Ascending aorta (tissue), 2 donors: ENCODE measurements at regions of chr13 and their contacts with region 1.

Region 1: GRCh38 chr13:77779552-77780272 is 82.2 kb downstream of the SLAIN1 start:
- DNase-seq: no peak
- H3K4me3 ChIP-seq: peak overlapping the region in 1 of 2 donors; percentile 6
- H3K27ac ChIP-seq: no peak overlapping the region
- H3K4me1 ChIP-seq: no peaks in the 10 kb centered on the region
- H3K27me3 ChIP-seq: no peaks in the 10 kb centered on the region
- CTCF ChIP-seq: peak; percentile 8 to 55 (median 39)

Region 2: GRCh38 chr13:77898097-77898496 is 118.4 kb after region 1 on chr13:
- intact Hi-C with region 1: no loop called
- DNase-seq: no peak
- H3K4me3 ChIP-seq: peak overlapping the region in 1 of 2 donors; percentile 10
- H3K27ac ChIP-seq: no peak overlapping the region
- H3K4me1 ChIP-seq: no peaks in the 10 kb centered on the region
- H3K27me3 ChIP-seq: no peaks in the 10 kb centered on the region
- CTCF ChIP-seq: no peak

Region 3: DNA sequence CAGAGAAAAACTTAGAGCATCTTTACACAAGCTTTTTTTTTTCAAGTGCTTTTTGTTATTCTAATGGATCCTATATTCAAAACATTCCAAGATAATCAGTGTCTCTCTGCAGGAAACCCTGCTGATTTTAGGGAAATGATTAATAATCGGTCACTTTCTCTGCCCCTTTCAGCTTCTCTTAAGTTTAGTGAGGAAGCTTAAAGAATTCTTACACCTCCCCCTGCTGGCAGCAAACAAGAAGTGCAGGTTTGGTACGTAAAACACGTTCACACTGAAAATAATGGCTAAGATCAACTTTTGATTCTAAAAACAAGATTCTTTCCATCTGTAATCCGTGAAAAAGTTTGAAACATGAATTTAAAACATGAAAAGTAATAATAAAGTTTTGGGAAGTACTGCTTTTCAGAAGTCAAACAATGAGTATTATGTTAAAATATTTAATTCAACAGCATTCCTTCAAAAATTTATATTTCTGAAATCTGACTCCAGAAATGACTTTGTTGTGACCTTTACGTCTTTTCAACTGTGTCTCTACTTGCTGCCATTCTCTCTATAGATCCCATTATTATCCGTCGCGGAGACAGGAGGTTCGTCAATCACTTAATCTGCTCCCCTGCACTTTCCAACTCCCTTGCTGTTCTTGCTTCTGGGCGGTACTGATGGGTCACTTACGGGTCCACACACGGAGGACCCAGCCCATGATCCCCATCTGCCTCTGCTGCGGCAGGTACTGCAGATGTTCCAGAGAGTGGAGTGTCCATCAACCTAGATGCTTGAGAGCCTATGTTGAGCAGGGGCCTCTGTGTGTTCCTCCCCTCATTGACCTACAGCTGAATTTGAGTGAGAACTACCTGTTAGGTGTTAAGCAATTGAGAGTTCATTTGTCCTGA is 342.0 kb after region 1 on chr13:
- intact Hi-C with region 1: loop called (anchors 1 kb)
- DNase-seq: no peak
- H3K4me3 ChIP-seq: peak overlapping the region; percentile 6 to 26
- H3K27ac ChIP-seq: no peak overlapping the region
- H3K4me1 ChIP-seq: no peaks in the 10 kb centered on the region
- H3K27me3 ChIP-seq: no peaks in the 10 kb centered on the region
- CTCF ChIP-seq: peak; percentile 54 to 76 (median 71)